Right ventricle myocardium inferior (tissue), 1 donor: ENCODE measurements at regions of chr6 and their contacts with region 1.

Region 1: GRCh38 chr6:130322673-130323268 is 43.0 kb upstream of the TMEM200A start:
- DNase-seq: no peak
- ATAC-seq: no peak

Region 2: DNA sequence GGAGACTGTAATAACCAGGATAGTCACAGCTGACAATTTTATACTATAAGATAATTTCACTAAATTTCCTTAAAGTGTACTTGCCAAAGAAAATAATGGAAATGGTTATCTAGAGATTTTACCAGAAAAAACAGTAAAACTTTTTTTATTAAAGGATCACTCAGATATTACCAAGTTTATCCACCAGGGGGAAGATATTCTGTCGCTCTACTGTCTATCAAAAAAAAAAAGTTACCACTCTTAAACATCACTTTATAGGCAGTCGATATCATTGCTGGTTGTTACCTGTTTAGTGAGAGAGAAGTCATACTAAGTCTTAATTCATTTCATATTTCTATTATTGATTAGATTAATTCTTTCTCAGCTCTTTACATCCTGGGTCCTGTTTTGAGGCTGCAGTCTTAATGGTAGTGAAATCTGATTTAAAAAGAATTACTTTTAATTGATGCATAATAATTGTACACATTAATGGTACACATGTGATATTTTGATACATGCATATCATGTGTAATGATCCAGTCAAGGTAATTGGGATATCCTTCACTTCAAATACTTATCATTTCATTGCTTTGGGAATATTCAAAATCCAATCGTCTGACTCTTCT is 285.5 kb before region 1 on chr6:
- intact Hi-C with region 1: no loop called
- DNase-seq: no peak
- ATAC-seq: no peak

Region 3: GRCh38 chr6:130697995-130698535 is 375.3 kb after region 1 on chr6:
- intact Hi-C with region 1: loop called (anchors 10 kb)
- DNase-seq: no peak
- ATAC-seq: peak; percentile 52

Region 4: DNA sequence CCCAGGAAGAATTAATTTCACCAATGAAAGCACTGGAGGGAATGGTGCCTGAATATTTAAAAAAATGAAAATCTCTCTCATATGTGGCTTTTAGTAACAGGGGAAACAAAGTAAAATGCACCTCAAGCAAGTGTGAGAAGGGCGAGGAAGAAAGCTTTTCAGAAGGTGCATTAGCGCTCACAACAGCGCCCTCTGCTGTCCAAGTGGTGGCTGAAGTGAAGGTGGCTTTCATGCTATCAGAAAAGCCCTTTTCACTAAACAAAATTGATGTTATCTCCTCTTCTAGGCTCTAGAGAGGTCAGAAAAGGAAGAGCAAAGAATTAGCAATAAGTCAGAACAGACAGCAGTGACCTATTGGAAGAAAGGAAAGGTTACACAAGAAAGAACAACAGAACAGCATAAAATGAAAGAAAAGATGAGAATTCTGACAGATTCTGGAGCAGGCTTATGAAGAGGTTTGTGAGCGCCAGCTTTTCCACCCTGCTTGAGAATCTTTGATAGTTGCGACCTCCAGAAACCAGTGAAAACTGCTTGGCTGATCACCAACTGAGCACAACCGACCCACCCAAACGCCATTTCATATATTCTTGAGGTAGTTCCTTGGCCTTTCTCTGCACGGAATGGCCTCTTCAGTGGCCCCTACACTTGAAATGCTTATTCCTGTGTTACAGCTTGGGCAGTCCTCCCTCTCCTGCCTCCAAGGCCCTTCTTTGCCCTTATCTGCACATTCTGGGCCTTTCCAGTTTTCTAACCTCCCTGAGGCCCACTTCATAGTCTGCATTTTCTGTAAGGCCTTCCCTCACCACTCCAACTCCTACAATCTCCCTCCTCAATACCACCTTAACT is 549.7 kb after region 1 on chr6:
- intact Hi-C with region 1: loop called (anchors 5 kb)
- DNase-seq: peak; percentile 72
- ATAC-seq: no peak